ENCODE measurements at regions of chr10 and their contacts with region 1.

Region 1: GRCh38 chr10:35218339-35218955 is 91.8 kb downstream of the CREM start:
- DNase-seq: peak in 1 of 2 experiments; percentile 77
- H3K4me3 ChIP-seq: no peak overlapping the region
- H3K27ac ChIP-seq: no peak overlapping the region
- H3K4me1 ChIP-seq: no peaks in the 10 kb centered on the region; a peak in 1 of 7 replicates
- H3K27me3 ChIP-seq: peaks cover 0 to 1% (median 0%) of the 10 kb centered on the region in 4 experiments; a peak in 1 of 7 replicates
- CTCF ChIP-seq: peak in 2 of 3 experiments; percentile 81 to 83; a peak in 3 of 4 replicates
- EP300 ChIP-seq: no peak
- POLR2A ChIP-seq: no peak
- RAD21 ChIP-seq: peak; percentile 75 to 85

Region 2: DNA sequence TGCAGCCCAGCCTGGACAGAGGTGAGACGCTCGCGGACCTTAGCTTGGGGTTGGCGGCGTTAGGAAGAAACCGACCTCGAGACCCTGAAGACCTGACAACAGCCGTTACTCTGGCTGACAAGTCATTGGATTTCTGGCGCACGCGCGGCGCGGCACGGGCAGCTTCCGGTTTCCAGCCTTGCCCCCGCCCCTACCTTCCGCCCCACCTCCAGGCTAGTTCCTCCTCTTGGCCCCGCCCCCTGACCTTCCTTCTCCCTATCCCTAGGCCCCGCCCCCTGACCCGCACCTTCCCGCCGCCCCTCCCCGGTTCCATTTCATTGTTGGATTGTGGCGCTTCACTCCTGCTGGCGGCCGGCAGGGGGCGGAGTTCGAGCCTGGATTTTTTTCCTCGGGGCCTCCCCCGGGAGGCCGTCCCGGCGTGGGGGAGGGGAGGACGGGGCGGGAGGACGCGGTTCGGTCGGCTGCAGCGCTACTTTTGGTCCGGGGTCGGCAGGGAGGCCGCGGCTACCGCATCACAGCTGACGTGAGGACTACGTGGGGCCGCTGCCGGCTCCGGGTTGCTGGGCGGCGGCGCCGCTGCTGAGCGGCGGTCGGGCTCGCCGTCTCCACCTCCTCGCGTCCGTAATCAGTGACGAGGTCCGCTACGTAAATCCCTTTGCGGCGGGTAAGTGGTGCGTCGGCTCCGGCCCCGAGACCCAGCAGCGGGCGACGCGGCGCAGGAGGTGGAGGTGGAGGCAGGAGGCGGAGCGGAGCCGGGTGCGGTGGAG is 91.7 kb before region 1 on chr10 and contains the start of gene CREM:
- CTCF ChIA-PET with region 1: interaction called, 177 read pairs
- POLR2A ChIA-PET with region 1: no interaction called
- DNase-seq: peak; percentile 93 to 99
- H3K4me3 ChIP-seq: peak within 1 kb of the TSS; percentile 59 to 87 (median 81)
- H3K27ac ChIP-seq: peak within 1 kb of the TSS; percentile 91
- H3K4me1 ChIP-seq: peaks cover 0 to 3% (median 0%) of the 10 kb centered on the region in 4 experiments; a peak in 2 of 7 replicates
- H3K27me3 ChIP-seq: no peaks in the 10 kb centered on the region; a peak in 1 of 7 replicates
- CTCF ChIP-seq: peak; percentile 55 to 84 (median 75)
- EP300 ChIP-seq: peak in 1 of 2 experiments; percentile 56; a peak in 1 of 3 replicates
- POLR2A ChIP-seq: peak; percentile 70 to 94
- RAD21 ChIP-seq: peak; percentile 44 to 65
- total RNA-seq, gene CREM: 21.9 and 24.4 TPM in 2 replicates

Region 3: DNA sequence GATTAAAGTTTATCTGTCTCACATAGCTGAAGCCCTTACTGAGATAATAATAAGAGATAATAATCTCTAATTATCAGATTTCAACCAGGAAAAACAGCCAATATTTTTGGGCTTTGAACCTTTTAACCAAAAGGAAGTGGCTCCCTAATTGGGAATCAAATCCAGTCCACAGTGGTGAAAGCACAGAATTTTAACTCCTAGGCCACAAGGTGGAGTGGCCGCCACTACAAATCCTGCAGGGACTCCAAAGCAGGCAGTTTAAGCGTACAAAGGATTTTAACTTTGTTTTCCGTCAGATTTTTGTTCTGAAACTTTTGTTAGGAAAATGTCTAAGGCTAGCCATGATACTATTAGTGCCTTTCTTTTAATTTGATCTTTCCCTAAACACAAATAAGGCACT is 18.3 kb after region 1 on chr10:
- CTCF ChIA-PET with region 1: interaction called, 12 read pairs
- POLR2A ChIA-PET with region 1: no interaction called
- DNase-seq: no peak
- H3K4me3 ChIP-seq: no peak overlapping the region
- H3K27ac ChIP-seq: no peak overlapping the region
- H3K4me1 ChIP-seq: no peaks in the 10 kb centered on the region
- H3K27me3 ChIP-seq: no peaks in the 10 kb centered on the region
- CTCF ChIP-seq: peak in 2 of 3 experiments; percentile 10 to 17; a peak in 2 of 4 replicates
- EP300 ChIP-seq: no peak
- POLR2A ChIP-seq: no peak
- RAD21 ChIP-seq: peak; percentile 29 to 47; a peak in 3 of 4 replicates

Measured in H1 (cell line).